CD4-positive, alpha-beta T cell (primary cell): ENCODE measurements at regions of chr19 and their contacts with region 1.

Region 1: DNA sequence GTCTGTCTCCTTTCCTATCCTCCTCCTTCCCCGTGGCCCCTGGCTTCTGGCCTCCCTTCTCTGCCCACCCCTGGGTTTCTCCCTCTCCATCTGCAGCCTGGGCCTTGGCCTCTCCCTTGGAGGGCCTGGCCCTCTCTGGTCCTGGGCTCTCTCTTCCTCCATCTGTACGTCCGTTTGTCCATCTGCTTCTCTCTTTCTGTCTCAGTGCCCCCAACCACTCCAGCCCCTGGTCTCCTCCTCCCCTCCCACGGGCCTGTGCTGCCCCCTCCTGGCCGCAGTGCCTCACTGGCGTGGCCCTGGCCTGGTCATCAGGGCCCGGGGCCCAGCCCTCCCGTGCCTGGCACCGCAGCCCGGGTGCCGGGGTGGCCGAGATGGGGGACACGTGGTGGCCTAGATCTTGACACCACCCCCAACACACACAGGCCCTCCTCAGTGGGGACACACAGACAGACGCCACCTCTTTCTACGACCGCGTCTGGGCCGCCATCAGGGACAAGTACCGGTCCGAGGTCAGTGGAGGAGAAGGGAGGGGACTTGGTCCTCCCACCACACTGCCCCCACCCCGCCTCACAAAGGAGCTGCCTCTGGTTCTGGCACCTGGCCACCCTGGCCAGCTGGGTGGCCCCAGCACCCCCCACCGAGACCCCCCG is 11.3 kb downstream of the PRKCSH start:
- DNase-seq: peak in 13 of 14 experiments; percentile 25 to 66 (median 36)
- ATAC-seq: peak; percentile 54
- H3K4me3 ChIP-seq: no peak overlapping the region
- H3K4me3 Mint-ChIP-seq: no peak overlapping the region
- H3K27ac ChIP-seq: no peak overlapping the region
- H3K27ac Mint-ChIP-seq: no peak overlapping the region
- H3K4me1 ChIP-seq: no peaks in the 10 kb centered on the region
- H3K4me1 Mint-ChIP-seq: no peaks in the 10 kb centered on the region
- H3K27me3 ChIP-seq: no peaks in the 10 kb centered on the region
- H3K27me3 Mint-ChIP-seq: no peaks in the 10 kb centered on the region
- CTCF ChIP-seq: peak; percentile 45

Region 2: DNA sequence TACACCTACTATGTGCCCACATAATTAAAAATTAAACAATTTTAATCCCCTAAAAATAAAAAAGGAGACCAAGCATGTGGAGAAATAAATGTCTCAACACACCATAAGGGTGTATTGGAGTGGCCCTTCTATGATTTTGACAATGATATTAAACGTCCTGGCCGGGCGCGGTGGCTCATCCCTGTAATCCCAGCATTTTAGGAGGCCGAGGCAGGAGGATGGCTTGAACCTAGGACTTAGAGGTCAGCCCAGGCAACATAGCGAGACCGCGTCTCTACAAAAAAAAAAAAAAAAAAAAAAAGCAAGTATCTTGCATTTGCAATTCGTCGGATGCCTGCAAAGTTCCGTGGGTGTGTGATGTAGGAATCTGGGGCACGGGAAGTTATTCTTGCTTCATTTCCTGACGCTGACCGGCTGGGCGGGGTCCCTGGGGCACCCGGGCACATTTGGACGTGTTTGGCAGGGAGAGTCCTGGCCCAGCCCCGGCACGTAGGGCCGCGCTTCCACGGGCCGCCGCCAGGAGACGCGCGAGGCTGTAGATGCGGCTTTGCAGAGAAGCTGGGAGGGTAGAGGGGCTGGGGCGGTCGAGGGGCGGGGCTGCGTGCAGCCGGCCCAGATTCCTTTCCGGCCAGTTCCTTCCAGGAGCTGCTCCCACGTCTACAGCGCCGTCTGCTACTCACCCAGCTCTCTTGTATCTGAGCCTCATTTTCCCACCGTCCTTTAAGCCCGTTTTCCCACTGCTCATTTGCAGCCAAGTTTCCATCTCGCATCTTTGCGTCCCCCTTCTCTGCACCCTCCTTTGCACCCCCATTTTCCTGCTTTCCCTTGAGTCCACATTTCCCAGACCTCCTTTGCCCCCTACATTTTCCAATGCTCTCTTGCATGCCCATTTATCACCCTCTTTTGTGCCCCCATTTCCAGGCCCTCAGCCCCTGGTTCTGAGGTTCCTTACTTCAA is 153.1 kb before region 1 on chr19:
- CTCF ChIA-PET with region 1: interaction called, 3 read pairs
- POLR2A ChIA-PET with region 1: no interaction called
- intact Hi-C with region 1: loop called in 1 of 2 experiments (anchors 1 kb)
- DNase-seq: peak; percentile 57 to 87 (median 77)
- ATAC-seq: peak; percentile 98
- H3K4me3 ChIP-seq: no peak overlapping the region
- H3K4me3 Mint-ChIP-seq: no peak overlapping the region
- H3K27ac ChIP-seq: no peak overlapping the region
- H3K27ac Mint-ChIP-seq: no peak overlapping the region
- H3K4me1 ChIP-seq: peaks cover 11% of the 10 kb centered on the region
- H3K4me1 Mint-ChIP-seq: peaks cover 9% of the 10 kb centered on the region
- H3K27me3 ChIP-seq: peaks cover 14 to 16% of the 10 kb centered on the region in 2 experiments
- H3K27me3 Mint-ChIP-seq: peaks cover 39% of the 10 kb centered on the region
- CTCF ChIP-seq: peak; percentile 86

Region 3: GRCh38 chr19:11738746-11739620 is 292.2 kb after region 1 on chr19 and contains the start of gene ZNF823:
- CTCF ChIA-PET with region 1: no interaction called
- POLR2A ChIA-PET with region 1: no interaction called
- intact Hi-C with region 1: no loop called
- DNase-seq: peak; percentile 92 to 99 (median 96)
- ATAC-seq: peak; percentile 99
- H3K4me3 ChIP-seq: peak within 1 kb of the TSS; percentile 87
- H3K4me3 Mint-ChIP-seq: peak within 1 kb of the TSS; percentile 96
- H3K27ac ChIP-seq: no peak within 1 kb of the TSS
- H3K27ac Mint-ChIP-seq: peak within 1 kb of the TSS; percentile 73
- H3K4me1 ChIP-seq: peaks cover 21% of the 10 kb centered on the region
- H3K4me1 Mint-ChIP-seq: peaks cover 22% of the 10 kb centered on the region
- H3K27me3 ChIP-seq: no peaks in the 10 kb centered on the region
- H3K27me3 Mint-ChIP-seq: no peaks in the 10 kb centered on the region
- CTCF ChIP-seq: no peak
- total RNA-seq, gene ZNF823: 1.7 to 2.2 TPM

Region 4: GRCh38 chr19:11814029-11814699 is 367.4 kb after region 1 on chr19 and contains the start of gene ZNF440:
- CTCF ChIA-PET with region 1: no interaction called
- POLR2A ChIA-PET with region 1: no interaction called
- intact Hi-C with region 1: no loop called
- DNase-seq: peak; percentile 65 to 89 (median 77)
- ATAC-seq: peak; percentile 95
- H3K4me3 ChIP-seq: peak within 1 kb of the TSS; percentile 97
- H3K4me3 Mint-ChIP-seq: peak within 1 kb of the TSS; percentile 98
- H3K27ac ChIP-seq: peak within 1 kb of the TSS in 1 of 2 donors; percentile 5
- H3K27ac Mint-ChIP-seq: peak within 1 kb of the TSS; percentile 75
- H3K4me1 ChIP-seq: peaks cover 23% of the 10 kb centered on the region
- H3K4me1 Mint-ChIP-seq: peaks cover 33% of the 10 kb centered on the region
- H3K27me3 ChIP-seq: no peaks in the 10 kb centered on the region
- H3K27me3 Mint-ChIP-seq: no peaks in the 10 kb centered on the region
- CTCF ChIP-seq: no peak
- total RNA-seq, gene ZNF440: 5.8 to 6.8 TPM